Activated naive CD4-positive, alpha-beta T cell treated with anti-CD3 and anti-CD28 coated beads for 36 hours (primary cell): ENCODE measurements at regions of chr2 and their contacts with region 1.

Region 1: GRCh38 chr2:85723707-85724360 is 29.7 kb downstream of the GNLY start:
- DNase-seq: no peak
- H3K4me3 Mint-ChIP-seq: no peak overlapping the region
- H3K27ac Mint-ChIP-seq: no peak overlapping the region
- H3K4me1 Mint-ChIP-seq: no peaks in the 10 kb centered on the region
- H3K27me3 Mint-ChIP-seq: peaks cover 2% of the 10 kb centered on the region

Region 2: DNA sequence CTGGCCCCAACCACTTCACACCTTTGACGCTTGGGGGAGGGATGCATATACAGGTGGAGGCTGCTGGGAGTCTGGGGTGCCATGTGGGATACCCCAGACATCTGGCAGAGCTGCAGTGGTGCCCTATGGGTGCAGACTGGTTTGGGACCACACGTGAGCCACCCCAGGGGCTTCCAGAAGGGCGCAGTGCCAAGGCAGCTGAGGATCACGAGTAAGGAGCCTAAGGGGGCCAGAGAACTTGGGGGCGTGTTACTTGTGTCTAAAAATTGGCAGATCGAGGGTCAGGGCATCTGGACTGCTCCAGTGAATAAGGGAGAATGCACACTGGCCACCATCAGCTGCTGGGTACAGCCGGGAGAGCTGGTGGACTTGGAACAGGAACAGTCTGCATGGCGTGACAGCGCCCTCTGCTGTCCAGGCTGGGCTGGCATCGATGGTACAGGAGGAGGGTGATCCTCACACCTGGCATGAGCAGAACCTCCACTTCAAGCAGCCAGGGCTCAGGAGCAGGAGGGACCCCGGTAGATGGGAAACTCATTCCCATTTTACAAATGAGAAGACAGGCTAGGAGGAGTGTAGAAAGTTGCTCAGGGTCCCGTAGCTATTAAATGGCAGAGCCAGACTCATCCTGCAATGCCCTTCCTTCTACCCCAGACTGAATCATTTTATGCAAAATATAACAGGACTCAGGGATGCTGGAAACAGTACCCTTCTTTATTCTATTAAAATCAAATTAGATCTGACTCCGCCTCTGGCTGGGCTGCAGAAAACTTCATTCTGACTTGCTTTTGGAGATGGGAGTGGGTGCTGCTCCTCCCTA is 90.4 kb after region 1 on chr2:
- CTCF ChIA-PET with region 1: interaction called, 66 read pairs
- intact Hi-C with region 1: loop called (anchors 1 kb)
- DNase-seq: peak; percentile 92
- H3K4me3 Mint-ChIP-seq: no peak overlapping the region
- H3K27ac Mint-ChIP-seq: no peak overlapping the region
- H3K4me1 Mint-ChIP-seq: no peaks in the 10 kb centered on the region
- H3K27me3 Mint-ChIP-seq: peaks cover 1% of the 10 kb centered on the region

Region 3: GRCh38 chr2:86290596-86291327 is 566.9 kb after region 1 on chr2:
- CTCF ChIA-PET with region 1: no interaction called
- intact Hi-C with region 1: no loop called
- DNase-seq: no peak
- H3K4me3 Mint-ChIP-seq: no peak overlapping the region
- H3K27ac Mint-ChIP-seq: no peak overlapping the region
- H3K4me1 Mint-ChIP-seq: no peaks in the 10 kb centered on the region
- H3K27me3 Mint-ChIP-seq: peaks cover 1% of the 10 kb centered on the region